Natural killer cell (primary cell): ENCODE measurements at regions of chr1 and their contacts with region 1.

Region 1: DNA sequence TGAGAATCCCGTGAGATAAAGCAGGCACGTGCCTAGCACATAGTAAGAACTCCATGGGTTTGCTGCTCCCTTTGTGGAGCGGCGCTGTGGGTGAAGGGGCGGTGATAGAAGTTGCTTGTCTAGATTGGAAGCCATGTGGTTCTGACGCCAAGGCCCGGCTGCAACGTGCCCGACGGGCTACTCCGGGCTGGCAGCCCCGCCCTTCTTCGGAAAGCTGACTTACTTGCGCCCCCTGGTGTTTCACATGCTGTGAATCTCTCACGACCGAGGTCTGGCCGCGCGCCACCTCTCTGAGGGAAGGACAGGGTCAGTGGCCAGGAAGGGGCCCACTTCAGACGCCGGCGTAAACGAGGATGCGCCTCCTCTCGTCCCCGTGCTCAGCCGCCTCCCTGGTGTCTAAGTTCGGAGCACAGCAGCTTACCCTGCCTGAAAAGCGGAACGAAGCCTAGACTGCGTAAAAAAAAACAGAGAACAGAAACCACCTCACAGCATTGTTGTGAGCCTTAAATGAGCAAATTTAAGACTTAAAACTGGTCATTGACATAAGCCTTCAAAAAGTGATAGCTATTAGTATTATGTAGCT is 42.6 kb upstream of the WNT2B start:
- DNase-seq: peak; percentile 72 to 93
- ATAC-seq: peak; percentile 88 to 98 (median 97)
- H3K4me3 ChIP-seq: peak overlapping the region; percentile 27
- H3K4me3 Mint-ChIP-seq: peak overlapping the region; percentile 86
- H3K27ac ChIP-seq: no peak overlapping the region
- H3K27ac Mint-ChIP-seq: peak overlapping the region; percentile 7 to 55
- H3K4me1 ChIP-seq: peaks cover 13% of the 10 kb centered on the region
- H3K4me1 Mint-ChIP-seq: peaks cover 7 to 16% of the 10 kb centered on the region in 2 donors
- H3K27me3 ChIP-seq: no peaks in the 10 kb centered on the region
- H3K27me3 Mint-ChIP-seq: peaks cover 31 to 52% of the 10 kb centered on the region in 2 donors
- CTCF ChIP-seq: peak; percentile 79

Region 2: DNA sequence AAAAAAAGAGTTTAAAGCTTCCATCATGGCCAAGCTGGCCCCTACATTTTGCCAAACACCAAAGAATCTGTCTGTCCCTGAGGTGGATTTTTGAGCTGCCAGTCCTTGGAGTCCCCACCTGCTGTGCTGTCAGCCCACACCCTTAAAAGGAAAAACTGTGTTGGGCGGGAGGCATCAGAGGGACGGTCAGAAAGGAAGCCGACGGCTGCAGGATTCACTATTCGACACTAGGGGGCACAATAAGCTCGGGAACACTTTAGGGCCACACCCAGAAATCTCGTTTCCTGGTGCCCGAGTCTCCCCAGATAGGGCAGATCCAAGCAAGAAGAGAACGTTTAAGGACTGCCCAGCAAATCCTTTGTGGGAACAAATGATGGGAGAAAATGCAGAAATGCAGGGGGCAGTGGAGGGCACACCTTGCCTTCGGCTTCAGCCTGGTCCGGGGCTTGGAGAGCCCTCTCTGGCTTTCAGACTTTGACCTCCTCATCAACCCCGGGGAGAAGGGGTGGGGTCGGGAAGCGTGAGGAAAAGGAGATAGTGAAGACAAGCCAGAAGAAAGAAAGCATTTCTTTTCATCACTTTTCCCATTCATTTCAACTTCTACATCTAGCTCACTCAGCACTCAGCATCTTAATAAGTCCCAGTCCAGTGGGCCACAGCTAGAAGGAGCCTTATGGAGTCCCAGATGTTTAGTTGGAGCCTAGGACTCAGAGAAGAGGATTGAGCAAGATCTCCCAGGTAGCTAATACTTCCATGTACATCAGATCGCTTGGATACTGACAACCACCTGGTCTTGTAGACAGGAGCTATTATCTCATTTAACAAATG is 75.2 kb before region 1 on chr1:
- intact Hi-C with region 1: loop called (anchors 1 kb)
- DNase-seq: peak; percentile 61 to 91
- ATAC-seq: peak; percentile 88 to 94 (median 93)
- H3K4me3 ChIP-seq: no peak overlapping the region
- H3K4me3 Mint-ChIP-seq: peak overlapping the region; percentile 37
- H3K27ac ChIP-seq: no peak overlapping the region
- H3K27ac Mint-ChIP-seq: no peak overlapping the region
- H3K4me1 ChIP-seq: peaks cover 18% of the 10 kb centered on the region
- H3K4me1 Mint-ChIP-seq: peaks cover 15 to 17% of the 10 kb centered on the region in 2 donors
- H3K27me3 ChIP-seq: peaks cover 2% of the 10 kb centered on the region
- H3K27me3 Mint-ChIP-seq: peaks cover 37 to 49% of the 10 kb centered on the region in 2 donors
- CTCF ChIP-seq: peak; percentile 81